ENCODE measurements at regions of chr18 and their contacts with region 1.

Region 1: DNA sequence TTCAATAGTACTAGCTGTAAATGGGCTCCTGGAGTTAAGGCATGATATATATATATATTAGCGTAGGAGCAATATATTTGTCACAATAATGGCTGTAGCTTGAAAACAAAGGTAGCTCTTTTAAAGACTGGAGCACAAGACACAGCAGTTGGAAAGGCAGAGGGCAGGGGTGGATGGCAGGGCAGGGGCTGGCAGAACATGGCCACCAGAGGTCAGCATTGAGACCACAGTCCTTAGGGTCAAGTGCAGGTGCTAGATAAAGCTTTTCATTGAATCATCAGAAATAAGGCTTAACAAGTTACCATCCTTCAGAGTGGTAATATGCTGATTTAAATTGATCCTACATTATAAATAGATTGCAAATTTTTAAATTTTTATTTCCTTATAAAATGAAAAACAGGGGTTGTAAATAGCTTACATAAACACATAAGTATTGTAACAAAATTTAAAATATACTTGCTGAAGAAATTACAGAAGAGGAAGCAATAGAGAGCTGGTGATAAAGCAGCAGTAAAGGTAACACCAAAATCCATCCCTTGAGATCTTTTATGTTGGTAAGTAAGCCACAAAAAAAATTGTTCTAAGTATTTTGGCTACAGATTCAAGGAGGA is 161.2 kb upstream of the PIEZO2 start:
- H3K4me3 Mint-ChIP-seq: no peak overlapping the region
- H3K27ac Mint-ChIP-seq: no peak overlapping the region
- H3K4me1 Mint-ChIP-seq: peaks cover 6% of the 10 kb centered on the region
- H3K27me3 Mint-ChIP-seq: no peaks in the 10 kb centered on the region

Region 2: GRCh38 chr18:11357678-11358077 is 47.1 kb after region 1 on chr18:
- intact Hi-C with region 1: no loop called
- H3K4me3 Mint-ChIP-seq: no peak overlapping the region
- H3K27ac Mint-ChIP-seq: no peak overlapping the region
- H3K4me1 Mint-ChIP-seq: no peaks in the 10 kb centered on the region
- H3K27me3 Mint-ChIP-seq: no peaks in the 10 kb centered on the region

Region 3: GRCh38 chr18:11387880-11388279 is 77.3 kb after region 1 on chr18:
- intact Hi-C with region 1: loop called (anchors 5 kb)
- H3K4me3 Mint-ChIP-seq: no peak overlapping the region
- H3K27ac Mint-ChIP-seq: no peak overlapping the region
- H3K4me1 Mint-ChIP-seq: no peaks in the 10 kb centered on the region
- H3K27me3 Mint-ChIP-seq: no peaks in the 10 kb centered on the region

Region 4: GRCh38 chr18:11553098-11553940 is 242.7 kb after region 1 on chr18:
- intact Hi-C with region 1: loop called (anchors 2 kb)
- H3K4me3 Mint-ChIP-seq: no peak overlapping the region
- H3K27ac Mint-ChIP-seq: no peak overlapping the region
- H3K4me1 Mint-ChIP-seq: no peaks in the 10 kb centered on the region
- H3K27me3 Mint-ChIP-seq: peaks cover 3% of the 10 kb centered on the region

Measured in dendritic cell treated with granulocyte-macrophage colony-stimulating factor and Interleukin-4, amounts not matched to agents 40 ng/mL and 50 ng/mL, for 4 days (primary cell).